ENCODE measurements at regions of chr1 and their contacts with region 1.

Region 1: GRCh38 chr1:212477014-212477679 is 44.4 kb downstream of the NENF start:
- DNase-seq: peak; percentile 91
- H3K4me3 Mint-ChIP-seq: no peak overlapping the region
- H3K27ac Mint-ChIP-seq: peak overlapping the region; percentile 88
- H3K4me1 Mint-ChIP-seq: peaks cover 41% of the 10 kb centered on the region
- H3K27me3 Mint-ChIP-seq: no peaks in the 10 kb centered on the region
- CTCF ChIP-seq: peak; percentile 95

Region 2: DNA sequence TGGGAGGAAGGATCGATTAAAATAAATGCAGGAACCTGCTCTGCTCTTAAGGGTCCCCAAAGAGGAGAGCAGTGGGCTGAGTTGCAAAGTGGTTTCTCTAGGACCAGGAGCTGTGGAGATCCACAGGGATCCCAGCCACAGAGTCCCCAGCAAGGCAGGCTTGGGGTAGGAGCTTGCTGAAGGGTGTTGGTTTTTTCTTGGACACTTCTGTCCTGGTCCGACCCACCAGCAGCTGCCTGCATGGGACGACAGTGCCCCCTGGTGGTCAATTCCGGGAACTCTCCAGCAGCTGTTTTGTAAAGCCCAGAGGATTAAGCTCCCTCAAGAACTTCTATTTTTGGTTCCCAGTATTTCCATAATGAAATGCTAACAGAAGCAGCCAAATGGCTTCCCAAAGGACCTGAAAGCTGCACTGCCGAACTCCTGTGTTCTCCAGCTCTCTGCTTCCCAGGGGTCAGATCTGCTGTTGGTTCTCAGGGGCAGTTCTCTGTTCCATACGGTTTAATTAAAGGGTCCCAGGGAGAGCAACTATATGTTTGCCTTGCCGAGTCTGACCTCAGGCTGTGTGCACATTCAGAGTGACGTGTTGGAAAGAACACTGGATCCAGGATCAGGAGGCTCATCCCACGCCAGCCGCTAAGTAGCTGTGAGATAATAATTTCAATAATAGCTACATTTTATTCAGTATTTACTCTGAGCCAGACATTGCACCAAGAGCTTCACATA is 21.2 kb before region 1 on chr1:
- CTCF ChIA-PET with region 1: interaction called, 35 read pairs
- intact Hi-C with region 1: no loop called
- DNase-seq: peak; percentile 92
- H3K4me3 Mint-ChIP-seq: no peak overlapping the region
- H3K27ac Mint-ChIP-seq: no peak overlapping the region
- H3K4me1 Mint-ChIP-seq: no peaks in the 10 kb centered on the region
- H3K27me3 Mint-ChIP-seq: no peaks in the 10 kb centered on the region
- CTCF ChIP-seq: peak; percentile 98

Region 3: DNA sequence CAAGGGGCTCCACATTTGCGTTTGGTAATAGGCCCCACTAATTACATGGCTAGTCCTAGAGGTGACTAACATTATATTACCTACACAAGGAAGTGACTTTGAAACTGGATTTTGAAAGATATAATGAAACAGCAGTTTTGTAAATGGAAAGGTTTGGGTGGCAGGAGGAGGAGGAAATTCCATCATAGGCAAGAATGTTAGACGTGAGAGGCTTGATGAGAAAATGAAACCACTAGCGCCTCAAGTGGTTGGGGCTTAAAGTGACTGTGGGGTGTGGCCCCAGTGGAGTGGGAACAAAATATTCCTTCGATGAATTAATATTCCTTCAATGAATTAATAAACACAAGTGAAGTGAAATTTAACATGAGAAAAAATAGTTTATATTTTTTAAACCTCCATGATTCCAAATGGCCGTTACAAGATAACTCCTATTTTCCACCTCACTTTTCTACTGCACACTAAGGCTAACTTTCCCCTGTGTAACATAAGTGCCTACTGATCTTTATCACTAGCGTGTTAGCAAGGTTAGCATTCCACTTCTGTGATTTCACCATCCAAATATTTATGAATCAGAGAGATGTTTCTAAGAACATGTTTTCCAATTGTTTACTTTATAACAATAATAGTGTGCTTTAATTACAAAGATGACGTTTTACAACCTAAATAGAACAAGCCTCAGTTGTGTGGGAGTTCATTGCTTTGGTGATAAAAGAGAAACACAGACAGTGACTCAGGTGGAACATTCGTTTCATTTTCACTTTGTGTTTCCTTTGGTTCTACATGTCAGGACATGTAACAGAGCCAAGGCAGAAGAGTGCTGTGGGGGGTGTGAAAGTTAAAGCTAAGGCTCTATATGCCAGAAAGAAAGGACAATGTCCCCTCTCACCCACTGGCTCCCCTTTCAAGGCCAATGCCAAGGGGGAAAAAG is 118.9 kb after region 1 on chr1:
- CTCF ChIA-PET with region 1: interaction called, 16 read pairs
- intact Hi-C with region 1: loop called (anchors 1 kb)
- DNase-seq: peak; percentile 73
- H3K4me3 Mint-ChIP-seq: peak overlapping the region; percentile 28
- H3K27ac Mint-ChIP-seq: peak overlapping the region; percentile 87
- H3K4me1 Mint-ChIP-seq: peaks cover 25% of the 10 kb centered on the region
- H3K27me3 Mint-ChIP-seq: peaks cover 26% of the 10 kb centered on the region
- CTCF ChIP-seq: peak; percentile 86

Region 4: DNA sequence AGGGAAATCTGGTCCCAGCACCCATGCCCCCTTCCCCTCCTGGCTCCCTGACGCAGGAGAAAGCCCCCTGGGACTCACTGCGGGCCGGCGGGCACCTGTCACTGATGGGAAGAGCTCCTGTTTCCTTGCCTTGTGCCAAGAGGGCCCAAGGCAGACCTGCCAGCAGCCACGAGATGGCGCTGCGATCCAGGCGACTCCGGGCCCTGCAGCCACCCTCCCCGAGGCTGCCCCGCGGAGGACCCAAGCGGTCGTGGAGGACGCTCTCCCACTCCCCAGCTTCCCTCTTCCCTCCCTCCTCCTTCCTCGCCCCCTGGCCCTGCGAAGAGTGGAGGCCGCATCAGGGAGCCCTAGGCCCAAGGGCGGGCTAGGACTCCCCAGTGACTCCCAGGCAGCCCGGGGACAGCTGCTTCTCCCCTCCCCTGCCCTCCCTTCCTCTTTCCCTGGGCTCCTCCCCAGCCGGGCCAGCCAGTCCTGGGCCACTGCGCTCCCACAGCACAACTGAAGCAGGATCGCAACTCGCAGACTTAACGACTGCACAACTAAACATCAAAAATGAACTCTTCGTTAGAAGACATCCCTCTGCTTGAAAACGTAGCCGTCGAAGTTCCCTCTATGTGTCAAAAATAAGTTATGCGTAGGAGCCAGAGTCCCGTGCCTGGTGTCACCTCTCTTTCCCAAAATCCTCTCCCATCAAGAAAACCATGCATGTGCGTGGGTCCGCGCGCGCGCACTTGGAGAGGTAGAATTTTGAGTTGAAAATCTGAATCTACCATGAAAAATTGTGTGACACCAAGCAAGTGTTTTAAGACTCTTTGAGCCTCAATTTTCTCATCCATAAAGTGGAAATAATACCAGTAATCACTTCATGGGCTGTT is 188.3 kb after region 1 on chr1:
- CTCF ChIA-PET with region 1: interaction called, 12 read pairs
- intact Hi-C with region 1: no loop called
- DNase-seq: peak; percentile 91
- H3K4me3 Mint-ChIP-seq: peak overlapping the region; percentile 70
- H3K27ac Mint-ChIP-seq: peak overlapping the region; percentile 10
- H3K4me1 Mint-ChIP-seq: no peaks in the 10 kb centered on the region
- H3K27me3 Mint-ChIP-seq: peaks cover 24% of the 10 kb centered on the region
- CTCF ChIP-seq: peak; percentile 97

Region 5: GRCh38 chr1:212782422-212783154 is 305.4 kb after region 1 on chr1:
- CTCF ChIA-PET with region 1: no interaction called
- intact Hi-C with region 1: loop called (anchors 5 kb)
- DNase-seq: no peak
- H3K4me3 Mint-ChIP-seq: no peak overlapping the region
- H3K27ac Mint-ChIP-seq: peak overlapping the region; percentile 9
- H3K4me1 Mint-ChIP-seq: peaks cover 7% of the 10 kb centered on the region
- H3K27me3 Mint-ChIP-seq: no peaks in the 10 kb centered on the region
- CTCF ChIP-seq: peak; percentile 57